AG04450 (cell line): ENCODE measurements at regions of chr3 and their contacts with region 1.

Region 1: GRCh38 chr3:30042274-30042859 is 564.0 kb upstream of the TGFBR2 start:
- DNase-seq: peak; percentile 49
- H3K4me3 ChIP-seq: no peak overlapping the region
- H3K27ac ChIP-seq: no peak overlapping the region
- H3K27me3 ChIP-seq: no peaks in the 10 kb centered on the region
- CTCF ChIP-seq: peak; percentile 82

Region 2: DNA sequence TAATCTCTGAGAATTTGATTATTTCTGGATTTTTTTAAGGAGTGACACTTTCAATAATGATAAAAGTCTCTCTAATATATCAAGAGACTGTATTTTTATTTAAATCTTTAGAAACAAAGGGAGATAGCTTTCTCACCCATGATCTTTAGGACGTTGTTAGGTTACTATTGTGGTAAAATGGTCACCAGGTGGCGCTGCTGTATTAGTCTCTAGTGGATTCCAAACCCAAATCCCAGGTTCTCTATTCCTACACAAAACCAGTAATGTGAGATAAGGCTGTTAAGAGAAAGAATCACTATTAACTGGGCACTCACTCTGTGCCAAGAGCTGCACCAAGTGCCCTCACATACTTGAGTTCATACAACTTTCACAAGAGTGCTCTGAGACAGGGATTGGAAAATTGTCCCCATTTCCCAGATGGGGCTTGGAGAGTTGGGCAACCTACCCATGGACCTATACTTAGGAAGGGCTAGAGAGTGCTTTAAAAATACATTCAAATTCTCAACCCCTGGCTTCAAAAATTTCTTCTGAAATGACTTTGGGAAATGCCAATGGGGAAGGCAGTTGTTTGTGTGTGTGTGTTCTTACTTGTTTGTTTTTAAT is 29.3 kb before region 1 on chr3:
- CTCF ChIA-PET with region 1: interaction called, 13 read pairs
- POLR2A ChIA-PET with region 1: no interaction called
- DNase-seq: peak; percentile 24
- H3K4me3 ChIP-seq: no peak overlapping the region
- H3K27ac ChIP-seq: no peak overlapping the region
- H3K27me3 ChIP-seq: no peaks in the 10 kb centered on the region
- CTCF ChIP-seq: peak; percentile 72

Region 3: GRCh38 chr3:30188713-30189112 is 146.3 kb after region 1 on chr3:
- CTCF ChIA-PET with region 1: interaction called, 13 read pairs
- POLR2A ChIA-PET with region 1: no interaction called
- DNase-seq: no peak
- H3K4me3 ChIP-seq: no peak overlapping the region
- H3K27ac ChIP-seq: no peak overlapping the region
- H3K27me3 ChIP-seq: no peaks in the 10 kb centered on the region
- CTCF ChIP-seq: no peak

Region 4: GRCh38 chr3:30751610-30752299 is 709.4 kb after region 1 on chr3:
- CTCF ChIA-PET with region 1: interaction called, 87 read pairs
- POLR2A ChIA-PET with region 1: no interaction called
- DNase-seq: no peak
- H3K4me3 ChIP-seq: no peak overlapping the region
- H3K27ac ChIP-seq: no peak overlapping the region
- H3K27me3 ChIP-seq: no peaks in the 10 kb centered on the region
- CTCF ChIP-seq: peak; percentile 60

Region 5: DNA sequence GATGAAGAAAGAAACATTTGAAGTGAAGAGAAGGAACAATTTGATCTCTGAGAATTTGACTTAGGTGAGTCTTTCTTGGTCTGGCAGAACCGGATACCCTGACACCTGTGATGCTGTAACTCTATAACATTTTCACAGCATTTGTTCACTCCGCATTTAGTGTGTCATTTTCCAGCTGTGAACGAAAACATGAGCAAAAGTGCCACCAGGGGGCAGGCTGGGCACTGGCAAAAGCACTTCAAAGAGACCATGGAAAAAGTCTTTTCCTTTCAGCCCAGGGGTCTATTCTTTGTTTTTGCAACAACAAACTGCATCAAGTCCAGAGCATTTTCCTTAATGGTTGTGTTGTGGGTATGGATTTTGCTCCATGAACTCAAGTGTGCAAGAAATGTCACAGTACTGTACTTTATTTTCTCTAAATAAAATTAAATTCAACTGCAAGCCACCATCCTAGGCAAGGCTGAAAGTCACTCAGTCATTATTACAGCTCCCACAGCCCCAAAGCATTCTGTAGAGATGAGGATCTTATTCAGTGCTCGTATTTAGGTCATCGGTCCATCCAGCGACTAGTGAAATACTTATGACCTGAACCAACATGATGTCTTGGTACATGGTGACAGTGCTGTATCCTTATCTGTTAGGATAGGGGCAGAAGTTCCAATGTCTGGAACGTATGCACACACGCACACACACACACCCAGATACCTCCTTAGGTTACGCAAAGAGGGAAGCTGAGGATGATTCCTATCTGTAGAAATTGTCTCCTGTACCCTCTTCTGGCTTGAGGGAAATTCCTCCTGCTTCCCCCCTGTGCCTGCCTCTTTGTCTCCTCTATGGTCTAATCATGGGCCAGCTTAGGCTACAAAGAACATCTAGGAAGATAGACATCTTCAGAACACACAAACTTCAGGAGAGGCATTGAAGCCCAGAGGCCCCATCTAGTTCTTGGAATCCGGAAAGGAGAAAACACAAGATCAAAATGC is 726.6 kb after region 1 on chr3:
- CTCF ChIA-PET with region 1: interaction called, 21 read pairs
- POLR2A ChIA-PET with region 1: no interaction called
- DNase-seq: no peak
- H3K4me3 ChIP-seq: no peak overlapping the region
- H3K27ac ChIP-seq: no peak overlapping the region
- H3K27me3 ChIP-seq: no peaks in the 10 kb centered on the region
- CTCF ChIP-seq: peak; percentile 89